Endothelial cell of umbilical vein (primary cell): ENCODE measurements at regions of chr3 and their contacts with region 1.

Region 1: GRCh38 chr3:145767909-145768308 is 393.1 kb downstream of the PLOD2 start:
- DNase-seq: peak; percentile 40
- H3K4me3 ChIP-seq: no peak overlapping the region
- H3K27ac ChIP-seq: no peak overlapping the region
- H3K4me1 ChIP-seq: no peaks in the 10 kb centered on the region
- H3K27me3 ChIP-seq: no peaks in the 10 kb centered on the region
- CTCF ChIP-seq: peak; percentile 12 to 15
- POLR2A ChIP-seq: no peak

Region 2: DNA sequence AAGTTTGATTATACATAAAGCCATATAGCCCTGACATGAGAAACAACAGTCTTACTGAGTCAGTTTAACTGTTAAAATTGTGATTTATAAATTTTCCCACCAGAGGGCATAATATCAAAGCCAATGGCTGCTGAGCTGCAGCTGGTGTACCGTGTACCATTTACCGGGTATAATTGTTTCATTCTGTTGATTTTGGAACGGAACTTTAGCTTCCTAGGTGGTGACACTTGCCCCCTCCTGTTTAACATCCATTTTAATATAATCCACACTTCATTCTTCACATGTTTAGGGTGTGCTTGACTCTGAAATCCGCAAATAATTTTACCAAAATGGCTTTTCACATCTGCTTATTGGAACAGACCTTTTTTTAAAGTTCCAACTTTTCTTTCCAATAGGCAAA is 1992.5 kb before region 1 on chr3:
- CTCF ChIA-PET with region 1: interaction called, 13 read pairs
- POLR2A ChIA-PET with region 1: no interaction called
- dilution Hi-C with region 1: no loop called
- intact Hi-C with region 1: loop called (anchors 5 kb)
- DNase-seq: peak; percentile 57
- H3K4me3 ChIP-seq: no peak overlapping the region
- H3K27ac ChIP-seq: no peak overlapping the region
- H3K4me1 ChIP-seq: peaks cover 3% of the 10 kb centered on the region
- H3K27me3 ChIP-seq: no peaks in the 10 kb centered on the region
- CTCF ChIP-seq: peak; percentile 32 to 37
- POLR2A ChIP-seq: no peak

Region 3: DNA sequence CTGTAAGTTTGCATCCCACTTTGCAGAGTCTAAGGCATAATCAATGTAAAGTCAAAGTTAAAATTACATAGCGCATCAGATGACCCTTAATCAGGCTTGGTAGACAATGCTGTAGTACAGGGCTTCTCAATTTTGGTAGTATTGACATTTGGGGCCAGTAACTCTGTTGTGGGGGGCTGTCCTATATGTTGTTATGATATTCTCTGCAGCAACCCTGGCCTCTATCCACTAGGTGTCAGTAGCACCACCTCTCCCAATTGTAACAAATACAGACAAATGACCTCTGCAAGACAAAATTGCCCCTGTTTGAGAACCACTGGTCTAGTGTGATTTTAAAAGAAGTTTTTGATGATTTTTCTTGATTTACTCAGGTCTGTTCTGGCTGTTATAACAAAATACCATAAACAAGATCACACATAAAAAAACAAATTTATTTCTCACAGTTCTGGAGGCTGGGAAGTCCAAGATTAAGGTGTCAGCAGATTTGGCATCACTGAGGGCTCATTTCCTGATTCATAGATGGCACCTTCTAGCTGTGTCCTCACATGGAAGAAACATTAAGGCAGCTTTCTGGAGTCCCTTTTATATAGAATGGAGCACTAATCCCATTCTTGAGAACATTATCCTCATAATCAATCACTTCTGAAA is 1882.0 kb before region 1 on chr3:
- CTCF ChIA-PET with region 1: interaction called, 12 read pairs
- POLR2A ChIA-PET with region 1: no interaction called
- dilution Hi-C with region 1: no loop called
- intact Hi-C with region 1: no loop called
- DNase-seq: peak; percentile 36
- H3K4me3 ChIP-seq: no peak overlapping the region
- H3K27ac ChIP-seq: no peak overlapping the region
- H3K4me1 ChIP-seq: peaks cover 9% of the 10 kb centered on the region
- H3K27me3 ChIP-seq: no peaks in the 10 kb centered on the region
- CTCF ChIP-seq: peak; percentile 58 to 60
- POLR2A ChIP-seq: no peak

Region 4: DNA sequence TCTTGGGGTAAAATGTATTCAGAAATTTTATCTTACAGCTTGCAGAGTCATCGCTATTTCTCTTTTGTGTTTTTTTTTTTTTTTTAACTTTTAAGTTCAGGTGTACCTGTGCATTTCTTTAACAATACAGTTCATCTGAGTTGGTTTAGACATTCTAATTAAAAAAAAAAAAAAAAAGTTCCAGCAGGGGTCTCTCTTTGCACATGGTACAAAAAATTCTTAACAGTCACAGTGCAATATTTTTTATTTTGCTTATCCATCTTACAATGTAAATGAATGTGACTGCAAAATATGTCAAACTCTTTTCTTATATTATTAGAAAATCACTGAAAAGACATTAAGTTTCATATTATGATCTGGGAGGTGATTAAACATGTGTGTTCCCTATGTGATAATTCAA is 1872.1 kb before region 1 on chr3:
- CTCF ChIA-PET with region 1: interaction called, 24 read pairs
- POLR2A ChIA-PET with region 1: no interaction called
- dilution Hi-C with region 1: no loop called
- intact Hi-C with region 1: loop called (anchors 1 kb)
- DNase-seq: peak; percentile 30
- H3K4me3 ChIP-seq: no peak overlapping the region
- H3K27ac ChIP-seq: no peak overlapping the region
- H3K4me1 ChIP-seq: peaks cover 3% of the 10 kb centered on the region
- H3K27me3 ChIP-seq: no peaks in the 10 kb centered on the region
- CTCF ChIP-seq: no peak
- POLR2A ChIP-seq: no peak

Region 5: GRCh38 chr3:145936971-145937370 is 169.1 kb after region 1 on chr3:
- CTCF ChIA-PET with region 1: no interaction called
- POLR2A ChIA-PET with region 1: no interaction called
- dilution Hi-C with region 1: no loop called
- intact Hi-C with region 1: no loop called
- DNase-seq: no peak
- H3K4me3 ChIP-seq: no peak overlapping the region
- H3K27ac ChIP-seq: no peak overlapping the region
- H3K4me1 ChIP-seq: no peaks in the 10 kb centered on the region
- H3K27me3 ChIP-seq: no peaks in the 10 kb centered on the region
- CTCF ChIP-seq: no peak
- POLR2A ChIP-seq: no peak

Region 6: GRCh38 chr3:145971186-145971585 is 203.3 kb after region 1 on chr3:
- CTCF ChIA-PET with region 1: no interaction called
- POLR2A ChIA-PET with region 1: no interaction called
- dilution Hi-C with region 1: no loop called
- intact Hi-C with region 1: no loop called
- DNase-seq: no peak
- H3K4me3 ChIP-seq: no peak overlapping the region
- H3K27ac ChIP-seq: no peak overlapping the region
- H3K4me1 ChIP-seq: no peaks in the 10 kb centered on the region
- H3K27me3 ChIP-seq: no peaks in the 10 kb centered on the region
- CTCF ChIP-seq: no peak
- POLR2A ChIP-seq: no peak

Region 7: DNA sequence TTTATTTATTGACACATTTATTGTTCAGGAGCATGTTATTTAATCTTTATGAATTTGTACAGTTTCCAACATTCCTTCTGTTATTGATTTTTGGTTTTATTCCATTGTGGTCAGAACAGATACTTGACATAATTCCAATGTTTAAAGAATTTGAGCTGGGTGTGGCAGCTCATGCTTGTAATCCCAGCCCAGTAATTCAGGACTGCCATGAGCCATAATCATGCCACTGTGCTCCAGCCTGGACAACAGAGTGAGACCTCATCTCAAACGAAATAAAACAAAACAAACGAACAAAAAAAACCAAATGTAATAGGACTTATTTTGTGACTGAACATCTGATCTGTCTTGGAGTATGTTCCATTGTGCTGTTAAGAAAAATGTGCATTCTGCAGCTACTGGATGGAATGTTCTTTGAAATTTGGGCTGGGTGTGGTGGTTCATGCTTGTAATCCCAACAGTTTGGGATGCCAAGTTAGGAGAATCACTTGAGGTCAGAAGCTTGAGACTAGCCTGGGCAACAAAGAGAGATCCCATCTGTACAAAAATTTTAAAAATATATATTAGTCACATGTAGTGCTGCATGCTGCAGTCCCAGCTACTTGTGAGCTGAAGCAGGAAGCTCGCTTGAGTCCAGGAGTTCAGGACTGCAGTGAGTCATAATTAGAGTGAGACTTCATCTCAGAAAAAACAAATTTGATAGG is 545.7 kb after region 1 on chr3:
- CTCF ChIA-PET with region 1: no interaction called
- POLR2A ChIA-PET with region 1: no interaction called
- dilution Hi-C with region 1: no loop called
- intact Hi-C with region 1: no loop called
- DNase-seq: peak; percentile 91
- H3K4me3 ChIP-seq: no peak overlapping the region
- H3K27ac ChIP-seq: peak overlapping the region; percentile 94
- H3K4me1 ChIP-seq: peaks cover 42% of the 10 kb centered on the region
- H3K27me3 ChIP-seq: no peaks in the 10 kb centered on the region
- CTCF ChIP-seq: no peak
- POLR2A ChIP-seq: peak; percentile 50